Heart left ventricle (tissue), 16 donors: ENCODE measurements at regions of chr4 and their contacts with region 1.

Region 1: GRCh38 chr4:143351774-143352451 is 15.2 kb downstream of the GAB1 start:
- DNase-seq: no peak
- ATAC-seq: peak in 3 of 4 donors; percentile 38 to 54 (median 40)
- H3K4me3 ChIP-seq: peak overlapping the region in 11 of 12 donors; percentile 3 to 53 (median 43)
- H3K27ac ChIP-seq: peak overlapping the region in 11 of 12 donors; percentile 31 to 80 (median 65)
- H3K4me1 ChIP-seq: peaks cover 0 to 72% (median 56%) of the 10 kb centered on the region in 12 donors
- H3K27me3 ChIP-seq: no peaks in the 10 kb centered on the region
- CTCF ChIP-seq: no peak
- POLR2A ChIP-seq: no peak

Region 2: GRCh38 chr4:143389579-143390195 is 37.8 kb after region 1 on chr4:
- intact Hi-C with region 1: loop called in 3 of 10 experiments (anchors 5 to 10 kb)
- DNase-seq: no peak
- ATAC-seq: peak in 3 of 4 donors; percentile 8 to 45 (median 43)
- H3K4me3 ChIP-seq: no peak overlapping the region
- H3K27ac ChIP-seq: peak overlapping the region in 9 of 12 donors; percentile 3 to 70 (median 53)
- H3K4me1 ChIP-seq: peaks cover 0 to 98% (median 79%) of the 10 kb centered on the region in 12 donors
- H3K27me3 ChIP-seq: no peaks in the 10 kb centered on the region
- CTCF ChIP-seq: no peak
- POLR2A ChIP-seq: no peak